MCF 10A (cell line): ENCODE measurements at regions of chr9 and their contacts with region 1.

Region 1: GRCh38 chr9:131334629-131335367 is 45.3 kb downstream of the PLPP7 start:
- DNase-seq: no peak
- H3K4me3 Mint-ChIP-seq: no peak overlapping the region
- H3K27ac Mint-ChIP-seq: no peak overlapping the region
- H3K4me1 Mint-ChIP-seq: no peaks in the 10 kb centered on the region
- H3K27me3 Mint-ChIP-seq: peaks cover 2% of the 10 kb centered on the region
- CTCF ChIP-seq: no peak

Region 2: DNA sequence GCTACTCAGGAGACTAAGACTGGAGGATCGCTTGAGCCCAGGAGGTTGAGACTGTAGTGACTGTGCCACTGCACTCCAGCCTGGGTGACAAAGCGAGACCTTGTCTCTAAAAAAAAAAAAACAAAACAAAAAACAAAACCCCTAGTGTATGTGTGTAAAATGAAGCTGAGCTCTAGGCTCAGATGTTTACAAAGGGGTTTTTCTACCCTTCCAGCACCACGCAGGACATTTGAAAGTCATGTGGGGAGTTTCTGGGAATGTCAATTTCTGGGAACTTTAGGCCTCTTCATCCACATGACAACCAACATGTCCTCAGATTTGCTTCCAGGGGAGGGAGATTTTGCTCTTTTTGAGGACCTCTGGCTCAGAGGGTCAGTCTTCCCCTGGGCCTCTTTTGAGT is 280.9 kb before region 1 on chr9:
- CTCF ChIA-PET with region 1: interaction called, 16 read pairs
- POLR2A ChIA-PET with region 1: no interaction called
- intact Hi-C with region 1: loop called (anchors 1 kb)
- DNase-seq: no peak
- H3K4me3 Mint-ChIP-seq: no peak overlapping the region
- H3K27ac Mint-ChIP-seq: no peak overlapping the region
- H3K4me1 Mint-ChIP-seq: no peaks in the 10 kb centered on the region
- H3K27me3 Mint-ChIP-seq: no peaks in the 10 kb centered on the region
- CTCF ChIP-seq: no peak

Region 3: GRCh38 chr9:131178382-131178781 is 156.4 kb before region 1 on chr9:
- CTCF ChIA-PET with region 1: interaction called, 103 read pairs
- POLR2A ChIA-PET with region 1: interaction called, 4 read pairs
- intact Hi-C with region 1: loop called (anchors 1 kb)
- DNase-seq: peak; percentile 57
- H3K4me3 Mint-ChIP-seq: no peak overlapping the region
- H3K27ac Mint-ChIP-seq: no peak overlapping the region
- H3K4me1 Mint-ChIP-seq: no peaks in the 10 kb centered on the region
- H3K27me3 Mint-ChIP-seq: no peaks in the 10 kb centered on the region
- CTCF ChIP-seq: peak; percentile 87

Region 4: GRCh38 chr9:131206495-131206894 is 128.3 kb before region 1 on chr9:
- CTCF ChIA-PET with region 1: interaction called, 11 read pairs
- POLR2A ChIA-PET with region 1: interaction called, 4 read pairs
- intact Hi-C with region 1: no loop called
- DNase-seq: no peak
- H3K4me3 Mint-ChIP-seq: no peak overlapping the region
- H3K27ac Mint-ChIP-seq: no peak overlapping the region
- H3K4me1 Mint-ChIP-seq: no peaks in the 10 kb centered on the region
- H3K27me3 Mint-ChIP-seq: no peaks in the 10 kb centered on the region
- CTCF ChIP-seq: no peak

Region 5: GRCh38 chr9:131255676-131256197 is 79.1 kb before region 1 on chr9:
- CTCF ChIA-PET with region 1: interaction called, 13 read pairs
- POLR2A ChIA-PET with region 1: no interaction called
- intact Hi-C with region 1: no loop called
- DNase-seq: no peak
- H3K4me3 Mint-ChIP-seq: no peak overlapping the region
- H3K27ac Mint-ChIP-seq: peak overlapping the region; percentile 29
- H3K4me1 Mint-ChIP-seq: peaks cover 7% of the 10 kb centered on the region
- H3K27me3 Mint-ChIP-seq: no peaks in the 10 kb centered on the region
- CTCF ChIP-seq: no peak

Region 6: GRCh38 chr9:131885144-131885609 is 550.4 kb after region 1 on chr9:
- CTCF ChIA-PET with region 1: no interaction called
- POLR2A ChIA-PET with region 1: no interaction called
- intact Hi-C with region 1: no loop called
- DNase-seq: no peak
- H3K4me3 Mint-ChIP-seq: no peak overlapping the region
- H3K27ac Mint-ChIP-seq: no peak overlapping the region
- H3K4me1 Mint-ChIP-seq: peaks cover 5% of the 10 kb centered on the region
- H3K27me3 Mint-ChIP-seq: no peaks in the 10 kb centered on the region
- CTCF ChIP-seq: no peak